Endothelial cell of umbilical vein (primary cell): ENCODE measurements at regions of chr13 and their contacts with region 1.

Region 1: DNA sequence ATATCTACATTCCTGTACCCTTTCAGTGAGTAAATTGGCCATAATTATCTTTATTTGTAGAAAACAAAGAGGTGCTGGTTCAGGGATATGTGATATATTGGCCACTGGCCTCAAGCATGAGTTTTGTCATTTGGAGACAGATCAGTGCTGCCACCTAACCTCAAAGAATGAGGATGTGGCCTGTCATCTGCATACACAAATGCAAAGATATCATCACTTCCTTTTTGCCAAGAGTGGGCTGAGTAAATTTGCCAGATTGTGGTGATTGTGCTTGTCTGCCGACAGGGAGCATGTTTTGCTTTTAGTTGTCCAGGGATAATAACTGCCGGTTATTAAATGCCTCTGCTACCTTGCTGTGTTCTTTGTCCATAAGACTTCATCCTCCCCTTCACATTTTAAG is 44.2 kb downstream of the WASF3 start:
- DNase-seq: peak; percentile 79
- H3K4me3 ChIP-seq: no peak overlapping the region
- H3K27ac ChIP-seq: no peak overlapping the region
- H3K4me1 ChIP-seq: peaks cover 19% of the 10 kb centered on the region
- H3K27me3 ChIP-seq: no peaks in the 10 kb centered on the region
- CTCF ChIP-seq: peak in 1 of 2 donors; percentile 17
- POLR2A ChIP-seq: no peak

Region 2: GRCh38 chr13:26589754-26590153 is 11.9 kb before region 1 on chr13:
- CTCF ChIA-PET with region 1: interaction called, 13 read pairs
- POLR2A ChIA-PET with region 1: interaction called, 4 read pairs
- dilution Hi-C with region 1: no loop called
- intact Hi-C with region 1: loop called (anchors 1 kb)
- DNase-seq: peak; percentile 96
- H3K4me3 ChIP-seq: peak overlapping the region in 2 of 3 experiments; percentile 26 to 52
- H3K27ac ChIP-seq: peak overlapping the region; percentile 87
- H3K4me1 ChIP-seq: peaks cover 70% of the 10 kb centered on the region
- H3K27me3 ChIP-seq: no peaks in the 10 kb centered on the region
- CTCF ChIP-seq: no peak
- POLR2A ChIP-seq: no peak

Region 3: DNA sequence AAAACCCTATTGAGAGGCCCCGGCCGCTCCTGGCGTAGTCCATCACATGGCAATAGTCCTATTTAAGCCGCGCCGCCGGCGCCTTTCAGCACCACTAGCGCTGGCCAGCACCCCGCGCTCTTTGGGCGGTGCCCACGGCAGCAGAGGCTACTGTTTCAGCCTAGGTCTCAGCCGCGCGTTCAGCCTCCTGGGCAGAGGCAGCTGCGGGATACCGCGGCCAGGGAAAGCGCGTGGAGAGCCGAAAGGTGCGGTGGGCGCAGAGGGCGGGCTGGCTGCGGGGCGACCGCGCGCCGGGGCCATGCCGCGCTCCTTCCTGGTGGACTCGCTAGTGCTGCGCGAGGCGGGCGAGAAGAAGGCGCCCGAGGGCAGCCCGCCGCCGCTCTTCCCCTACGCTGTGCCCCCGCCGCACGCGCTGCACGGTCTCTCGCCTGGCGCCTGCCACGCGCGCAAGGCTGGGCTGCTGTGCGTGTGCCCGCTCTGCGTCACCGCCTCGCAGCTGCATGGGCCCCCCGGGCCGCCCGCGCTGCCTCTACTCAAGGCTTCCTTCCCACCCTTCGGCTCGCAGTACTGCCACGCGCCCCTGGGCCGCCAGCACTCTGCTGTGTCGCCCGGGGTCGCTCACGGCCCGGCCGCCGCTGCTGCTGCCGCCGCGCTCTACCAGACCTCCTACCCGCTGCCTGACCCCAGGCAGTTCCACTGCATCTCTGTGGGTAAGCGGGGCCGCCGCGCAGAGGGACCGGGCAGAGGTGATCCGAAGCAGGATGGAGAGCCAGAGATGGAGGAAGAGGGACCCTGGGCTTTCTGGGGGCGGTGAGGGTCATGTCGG is 1190.9 kb after region 1 on chr13 and contains the start of gene GSX1:
- CTCF ChIA-PET with region 1: no interaction called
- POLR2A ChIA-PET with region 1: no interaction called
- dilution Hi-C with region 1: no loop called
- intact Hi-C with region 1: no loop called
- DNase-seq: peak; percentile 67
- H3K4me3 ChIP-seq: peak within 1 kb of the TSS in 1 of 3 experiments; percentile 8
- H3K27ac ChIP-seq: no peak within 1 kb of the TSS
- H3K4me1 ChIP-seq: no peaks in the 10 kb centered on the region
- H3K27me3 ChIP-seq: peaks cover 81 to 94% of the 10 kb centered on the region in 2 experiments
- CTCF ChIP-seq: no peak
- POLR2A ChIP-seq: no peak
- total RNA-seq, gene GSX1: not detected in 2 replicates